CD8-positive, alpha-beta T cell (primary cell): ENCODE measurements at regions of chr7 and their contacts with region 1.

Region 1: GRCh38 chr7:100081535-100082102 is at the start of gene ZNF3:
- DNase-seq: peak; percentile 94 to 99 (median 97)
- ATAC-seq: peak; percentile 88
- H3K4me3 ChIP-seq: peak within 1 kb of the TSS; percentile 64 to 65
- H3K4me3 Mint-ChIP-seq: peak within 1 kb of the TSS; percentile 94
- H3K27ac ChIP-seq: peak within 1 kb of the TSS; percentile 58 to 78
- H3K27ac Mint-ChIP-seq: peak within 1 kb of the TSS; percentile 96
- H3K4me1 ChIP-seq: peaks cover 17% of the 10 kb centered on the region
- H3K4me1 Mint-ChIP-seq: peaks cover 38% of the 10 kb centered on the region
- H3K27me3 ChIP-seq: no peaks in the 10 kb centered on the region
- H3K27me3 Mint-ChIP-seq: no peaks in the 10 kb centered on the region
- CTCF ChIP-seq: peak; percentile 98
- total RNA-seq, gene ZNF3: 34.9 to 35.6 TPM

Region 2: DNA sequence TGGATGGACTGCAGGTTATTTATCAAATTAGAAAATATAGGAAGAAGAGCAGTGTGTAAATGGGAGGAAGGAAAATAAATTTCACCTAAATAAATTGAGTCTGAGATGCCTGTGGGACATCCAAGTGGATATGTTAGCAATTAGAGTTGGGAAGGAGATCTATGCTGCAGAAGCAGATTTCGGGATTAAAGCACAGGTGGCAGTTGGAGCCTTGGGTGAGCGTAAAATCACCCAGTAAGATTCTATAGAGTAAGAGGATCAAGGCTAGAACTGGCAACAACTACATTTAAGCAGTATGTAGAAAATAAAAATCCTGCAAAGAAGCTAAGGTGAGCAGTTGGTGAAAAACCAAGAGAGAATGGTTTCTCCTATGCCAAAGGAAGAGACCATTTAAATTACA is 170.6 kb before region 1 on chr7:
- CTCF ChIA-PET with region 1: interaction called, 3 read pairs
- POLR2A ChIA-PET with region 1: interaction called, 3 read pairs
- intact Hi-C with region 1: loop called in 1 of 2 experiments (anchors 2 kb)
- DNase-seq: no peak
- ATAC-seq: no peak
- H3K4me3 ChIP-seq: no peak overlapping the region
- H3K4me3 Mint-ChIP-seq: no peak overlapping the region
- H3K27ac ChIP-seq: no peak overlapping the region
- H3K27ac Mint-ChIP-seq: no peak overlapping the region
- H3K4me1 ChIP-seq: peaks cover 19% of the 10 kb centered on the region
- H3K4me1 Mint-ChIP-seq: peaks cover 63% of the 10 kb centered on the region
- H3K27me3 ChIP-seq: no peaks in the 10 kb centered on the region
- H3K27me3 Mint-ChIP-seq: no peaks in the 10 kb centered on the region
- CTCF ChIP-seq: no peak

Region 3: GRCh38 chr7:100015232-100016209 is 66.1 kb before region 1 on chr7 and contains the start of gene ZKSCAN1:
- CTCF ChIA-PET with region 1: no interaction called
- POLR2A ChIA-PET with region 1: no interaction called
- intact Hi-C with region 1: loop called (anchors 1 kb)
- DNase-seq: peak; percentile 67 to 95 (median 83)
- ATAC-seq: peak; percentile 91
- H3K4me3 ChIP-seq: peak within 1 kb of the TSS; percentile 61 to 100
- H3K4me3 Mint-ChIP-seq: peak within 1 kb of the TSS; percentile 95
- H3K27ac ChIP-seq: peak within 1 kb of the TSS; percentile 82 to 97
- H3K27ac Mint-ChIP-seq: peak within 1 kb of the TSS; percentile 98
- H3K4me1 ChIP-seq: peaks cover 22% of the 10 kb centered on the region
- H3K4me1 Mint-ChIP-seq: peaks cover 52% of the 10 kb centered on the region
- H3K27me3 ChIP-seq: no peaks in the 10 kb centered on the region
- H3K27me3 Mint-ChIP-seq: no peaks in the 10 kb centered on the region
- CTCF ChIP-seq: no peak
- total RNA-seq, gene ZKSCAN1: 30.0 to 35.9 TPM

Region 4: DNA sequence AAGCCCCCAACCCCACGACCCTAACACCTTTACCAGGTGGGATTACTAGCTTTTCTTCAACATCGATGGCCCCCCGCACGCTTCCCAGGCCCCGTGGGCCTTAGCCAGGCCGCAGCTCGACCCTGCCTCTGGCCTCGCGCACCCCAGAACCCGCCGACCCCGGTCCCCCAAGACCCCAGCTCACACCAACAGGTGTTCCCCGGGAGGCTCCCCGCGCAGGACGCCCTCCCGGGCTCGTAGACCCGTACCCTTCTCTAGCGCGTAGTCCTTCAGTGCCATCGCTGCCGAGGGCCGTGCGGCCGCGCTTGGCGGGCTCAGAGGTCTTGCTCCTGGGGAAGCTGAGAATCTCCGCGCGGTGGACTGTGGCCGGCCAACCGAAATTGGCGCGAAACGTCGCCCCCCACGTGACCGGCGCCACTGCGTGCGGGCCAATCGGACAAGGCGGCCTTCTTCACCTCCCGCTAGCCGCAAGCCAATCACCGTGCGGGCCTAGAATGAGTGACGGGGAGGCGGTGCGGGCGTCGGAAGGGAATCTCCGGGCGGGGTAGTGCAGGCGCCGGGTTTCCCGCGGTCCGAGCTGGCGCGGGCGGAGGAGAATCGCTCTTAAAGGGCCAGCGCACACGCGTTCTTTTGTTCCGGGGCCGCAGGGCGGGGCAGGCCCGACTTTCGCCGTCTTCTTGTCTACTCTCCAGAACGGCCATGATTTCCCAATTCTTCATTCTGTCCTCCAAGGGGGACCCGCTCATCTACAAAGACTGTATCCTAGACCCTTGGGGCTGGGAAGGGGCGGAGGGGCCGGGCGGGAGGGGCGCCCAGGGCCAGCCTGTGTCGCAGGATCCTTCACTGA is 19.6 kb after region 1 on chr7 and contains the starts of genes AP4M1 and MCM7:
- CTCF ChIA-PET with region 1: interaction called, 17 read pairs
- POLR2A ChIA-PET with region 1: interaction called, 22 read pairs
- intact Hi-C with region 1: loop called (anchors 1 to 2 kb)
- DNase-seq: peak; percentile 88 to 98 (median 96)
- ATAC-seq: peak; percentile 83
- H3K4me3 ChIP-seq: peak within 1 kb of the TSS; percentile 91 to 98
- H3K4me3 Mint-ChIP-seq: peak within 1 kb of the TSS; percentile 95
- H3K27ac ChIP-seq: peak within 1 kb of the TSS; percentile 80 to 89
- H3K27ac Mint-ChIP-seq: peak within 1 kb of the TSS; percentile 97
- H3K4me1 ChIP-seq: peaks cover 27% of the 10 kb centered on the region
- H3K4me1 Mint-ChIP-seq: peaks cover 41% of the 10 kb centered on the region
- H3K27me3 ChIP-seq: no peaks in the 10 kb centered on the region
- H3K27me3 Mint-ChIP-seq: no peaks in the 10 kb centered on the region
- CTCF ChIP-seq: no peak
- total RNA-seq, gene AP4M1: 2.8 to 3.9 TPM
- total RNA-seq, gene MCM7: 63.7 to 64.6 TPM

Region 5: GRCh38 chr7:100126931-100127865 is 45.6 kb after region 1 on chr7 and contains the start of gene MBLAC1:
- CTCF ChIA-PET with region 1: interaction called, 7 read pairs
- POLR2A ChIA-PET with region 1: interaction called, 3 read pairs
- intact Hi-C with region 1: loop called (anchors 1 kb)
- DNase-seq: peak; percentile 83 to 97 (median 93)
- ATAC-seq: peak; percentile 83
- H3K4me3 ChIP-seq: peak within 1 kb of the TSS; percentile 81 to 99
- H3K4me3 Mint-ChIP-seq: peak within 1 kb of the TSS; percentile 100
- H3K27ac ChIP-seq: peak within 1 kb of the TSS; percentile 92 to 98
- H3K27ac Mint-ChIP-seq: peak within 1 kb of the TSS; percentile 100
- H3K4me1 ChIP-seq: peaks cover 24% of the 10 kb centered on the region
- H3K4me1 Mint-ChIP-seq: peaks cover 39% of the 10 kb centered on the region
- H3K27me3 ChIP-seq: no peaks in the 10 kb centered on the region
- H3K27me3 Mint-ChIP-seq: no peaks in the 10 kb centered on the region
- CTCF ChIP-seq: no peak
- total RNA-seq, gene MBLAC1: 4.2 to 4.6 TPM